OCI-LY7 (cell line): ENCODE measurements at regions of chr10 and their contacts with region 1.

Region 1: GRCh38 chr10:26457088-26457487 is 18.9 kb downstream of the APBB1IP start:
- DNase-seq: peak; percentile 94
- H3K4me3 ChIP-seq: peak overlapping the region; percentile 57
- H3K27ac ChIP-seq: peak overlapping the region; percentile 95
- H3K4me1 ChIP-seq: peaks cover 78% of the 10 kb centered on the region
- CTCF ChIP-seq: no peak

Region 2: GRCh38 chr10:26468700-26469099 is 11.6 kb after region 1 on chr10:
- CTCF ChIA-PET with region 1: interaction called, 3 read pairs
- POLR2A ChIA-PET with region 1: interaction called, 30 read pairs
- intact Hi-C with region 1: no loop called
- DNase-seq: peak; percentile 47
- H3K4me3 ChIP-seq: peak overlapping the region; percentile 22
- H3K27ac ChIP-seq: peak overlapping the region; percentile 53
- H3K4me1 ChIP-seq: peaks cover 61% of the 10 kb centered on the region
- CTCF ChIP-seq: no peak

Region 3: DNA sequence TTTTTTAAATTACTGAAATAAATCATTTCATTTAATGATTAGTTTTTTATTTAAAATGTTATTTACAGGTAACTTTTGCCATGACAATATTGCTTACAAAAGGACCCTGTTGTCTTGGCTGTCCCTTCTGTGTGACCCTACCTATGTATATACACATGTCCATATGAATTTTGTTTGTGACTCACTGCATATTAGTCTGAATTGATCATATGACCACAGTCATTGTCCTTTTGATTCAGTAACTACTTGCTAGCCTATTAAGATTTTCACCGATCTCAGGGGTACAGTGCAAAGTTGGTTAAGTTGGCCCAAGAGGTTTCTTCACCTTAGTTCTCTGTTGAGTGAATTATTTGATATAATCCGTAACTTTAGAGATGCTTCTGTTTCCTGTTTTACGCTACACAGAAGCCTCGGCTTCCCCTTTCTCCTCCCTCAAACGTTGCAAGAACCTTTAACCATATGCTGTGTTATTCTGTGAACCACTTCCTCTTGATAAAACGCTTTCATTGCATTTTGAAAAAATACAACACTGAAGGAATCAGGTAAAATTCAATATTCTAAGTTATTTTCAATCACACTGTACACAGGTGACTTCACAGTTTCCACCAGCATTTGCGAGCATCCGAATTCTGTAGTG is 24.9 kb after region 1 on chr10:
- CTCF ChIA-PET with region 1: interaction called, 3 read pairs
- POLR2A ChIA-PET with region 1: interaction called, 10 read pairs
- intact Hi-C with region 1: loop called (anchors 1 kb)
- DNase-seq: peak; percentile 86
- H3K4me3 ChIP-seq: peak overlapping the region; percentile 58
- H3K27ac ChIP-seq: peak overlapping the region; percentile 96
- H3K4me1 ChIP-seq: peaks cover 85% of the 10 kb centered on the region
- CTCF ChIP-seq: no peak